Activated CD4-positive, alpha-beta T cell treated with anti-CD3 and anti-CD28 coated beads, Interleukin-2, amount 10 ng/mL, durations not matched to agents 24 days and 14 days (primary cell): ENCODE measurements at regions of chr17 and their contacts with region 1.

Region 1: GRCh38 chr17:58517734-58518609 is 3.5 kb upstream of the MTMR4 start:
- DNase-seq: peak; percentile 100
- H3K4me3 Mint-ChIP-seq: peak overlapping the region; percentile 95
- H3K27ac Mint-ChIP-seq: peak overlapping the region; percentile 87
- H3K4me1 Mint-ChIP-seq: peaks cover 39% of the 10 kb centered on the region
- H3K27me3 Mint-ChIP-seq: no peaks in the 10 kb centered on the region

Region 2: GRCh38 chr17:57084802-57085447 is 1433.0 kb before region 1 on chr17 and contains the start of gene AKAP1:
- intact Hi-C with region 1: loop called (anchors 5 kb)
- DNase-seq: peak; percentile 99
- H3K4me3 Mint-ChIP-seq: peak within 1 kb of the TSS; percentile 93
- H3K27ac Mint-ChIP-seq: peak within 1 kb of the TSS; percentile 92
- H3K4me1 Mint-ChIP-seq: peaks cover 45% of the 10 kb centered on the region
- H3K27me3 Mint-ChIP-seq: peaks cover 10% of the 10 kb centered on the region
- total RNA-seq, gene AKAP1: 54.6 and 56.8 TPM in 2 replicates

Region 3: GRCh38 chr17:58337600-58338453 is 180.1 kb before region 1 on chr17:
- intact Hi-C with region 1: loop called (anchors 5 kb)
- DNase-seq: peak; percentile 98
- H3K4me3 Mint-ChIP-seq: peak overlapping the region; percentile 91
- H3K27ac Mint-ChIP-seq: peak overlapping the region; percentile 100
- H3K4me1 Mint-ChIP-seq: peaks cover 59% of the 10 kb centered on the region
- H3K27me3 Mint-ChIP-seq: no peaks in the 10 kb centered on the region

Region 4: DNA sequence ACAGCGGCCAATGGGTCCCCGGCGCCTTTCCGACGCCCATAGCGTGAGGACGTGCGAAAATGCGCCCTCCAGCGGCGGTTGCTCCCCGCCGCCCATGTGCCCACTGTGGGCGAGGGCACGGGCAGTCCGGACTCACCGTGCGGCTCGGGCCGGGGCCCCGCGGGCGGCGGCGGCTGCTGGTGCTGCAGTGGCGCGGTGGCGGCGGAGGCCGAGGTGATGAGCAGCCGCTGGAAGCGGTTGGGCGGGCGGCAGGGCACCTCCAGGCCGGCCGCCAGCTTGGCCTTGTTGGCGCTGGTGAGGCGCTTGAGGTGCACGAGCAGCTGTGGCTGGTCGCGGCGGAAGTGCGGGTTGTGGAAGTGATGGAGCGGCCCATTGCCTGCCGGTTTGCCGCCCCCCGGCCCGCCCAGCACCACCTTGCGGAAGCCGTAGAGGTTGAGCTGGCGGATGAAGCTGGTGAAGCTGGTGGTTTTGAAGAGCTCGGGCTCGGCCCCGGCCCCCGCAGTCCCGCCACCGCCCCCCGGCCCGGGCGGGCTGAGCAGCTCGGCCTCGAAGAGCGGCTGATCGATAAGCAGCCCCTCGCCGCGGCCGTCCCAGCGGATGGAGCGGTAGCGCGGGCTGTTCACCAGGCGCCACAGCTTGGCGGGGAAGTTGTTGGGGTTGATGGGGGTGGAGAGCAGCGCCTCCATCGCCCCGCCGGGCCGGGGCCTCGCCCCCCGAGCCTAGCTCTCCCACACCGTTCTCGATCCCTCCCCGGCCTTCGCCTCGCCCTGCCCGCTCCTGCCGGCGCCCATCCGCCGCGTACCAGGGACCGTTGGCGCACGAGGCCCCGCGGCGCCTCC is 30.2 kb before region 1 on chr17 and contains the start of gene HSF5:
- intact Hi-C with region 1: no loop called
- DNase-seq: peak; percentile 88
- H3K4me3 Mint-ChIP-seq: peak within 1 kb of the TSS; percentile 37
- H3K27ac Mint-ChIP-seq: no peak within 1 kb of the TSS
- H3K4me1 Mint-ChIP-seq: peaks cover 7% of the 10 kb centered on the region
- H3K27me3 Mint-ChIP-seq: no peaks in the 10 kb centered on the region
- total RNA-seq, gene HSF5: 0.80 and 0.91 TPM in 2 replicates

Region 5: GRCh38 chr17:58587702-58588254 is 69.8 kb after region 1 on chr17:
- intact Hi-C with region 1: loop called (anchors 2 kb)
- DNase-seq: peak; percentile 82
- H3K4me3 Mint-ChIP-seq: no peak overlapping the region
- H3K27ac Mint-ChIP-seq: no peak overlapping the region
- H3K4me1 Mint-ChIP-seq: peaks cover 1% of the 10 kb centered on the region
- H3K27me3 Mint-ChIP-seq: peaks cover 6% of the 10 kb centered on the region

Region 6: GRCh38 chr17:58658804-58659713 is 141.1 kb after region 1 on chr17:
- intact Hi-C with region 1: loop called (anchors 1 kb)
- DNase-seq: peak; percentile 94
- H3K4me3 Mint-ChIP-seq: peak overlapping the region; percentile 78
- H3K27ac Mint-ChIP-seq: peak overlapping the region; percentile 99
- H3K4me1 Mint-ChIP-seq: peaks cover 20% of the 10 kb centered on the region
- H3K27me3 Mint-ChIP-seq: peaks cover 13% of the 10 kb centered on the region

Region 7: GRCh38 chr17:59004338-59005111 is 486.6 kb after region 1 on chr17:
- intact Hi-C with region 1: loop called (anchors 1 kb)
- DNase-seq: peak; percentile 90
- H3K4me3 Mint-ChIP-seq: peak overlapping the region; percentile 4
- H3K27ac Mint-ChIP-seq: peak overlapping the region; percentile 30
- H3K4me1 Mint-ChIP-seq: peaks cover 15% of the 10 kb centered on the region
- H3K27me3 Mint-ChIP-seq: no peaks in the 10 kb centered on the region

Region 8: GRCh38 chr17:59155439-59156182 is 637.6 kb after region 1 on chr17 and contains the start of gene PRR11:
- intact Hi-C with region 1: loop called (anchors 1 kb)
- DNase-seq: peak; percentile 98
- H3K4me3 Mint-ChIP-seq: no peak within 1 kb of the TSS
- H3K27ac Mint-ChIP-seq: no peak within 1 kb of the TSS
- H3K4me1 Mint-ChIP-seq: peaks cover 44% of the 10 kb centered on the region
- H3K27me3 Mint-ChIP-seq: no peaks in the 10 kb centered on the region
- total RNA-seq, gene PRR11: 29.7 and 32.6 TPM in 2 replicates